ENCODE measurements at regions of chr18 and their contacts with region 1.

Region 1: GRCh38 chr18:57881818-57882413 is 78.8 kb upstream of the ATP8B1 start:
- DNase-seq: peak; percentile 2 to 48 (median 33)
- ATAC-seq: peak; percentile 79
- H3K4me3 ChIP-seq: no peak overlapping the region
- H3K4me3 Mint-ChIP-seq: no peak overlapping the region
- H3K27ac ChIP-seq: no peak overlapping the region
- H3K27ac Mint-ChIP-seq: no peak overlapping the region
- H3K4me1 ChIP-seq: no peaks in the 10 kb centered on the region
- H3K4me1 Mint-ChIP-seq: no peaks in the 10 kb centered on the region
- H3K27me3 ChIP-seq: no peaks in the 10 kb centered on the region
- H3K27me3 Mint-ChIP-seq: peaks cover 2 to 24% (median 20%) of the 10 kb centered on the region in 5 donors

Region 2: GRCh38 chr18:57544936-57545660 is 336.8 kb before region 1 on chr18:
- CTCF ChIA-PET with region 1: no interaction called
- POLR2A ChIA-PET with region 1: no interaction called
- intact Hi-C with region 1: no loop called
- DNase-seq: no peak
- ATAC-seq: peak; percentile 24
- H3K4me3 ChIP-seq: no peak overlapping the region
- H3K4me3 Mint-ChIP-seq: peak overlapping the region in 1 of 10 donors; percentile 2
- H3K27ac ChIP-seq: no peak overlapping the region
- H3K27ac Mint-ChIP-seq: no peak overlapping the region
- H3K4me1 ChIP-seq: no peaks in the 10 kb centered on the region
- H3K4me1 Mint-ChIP-seq: peaks cover 6 to 16% (median 10%) of the 10 kb centered on the region in 7 donors
- H3K27me3 ChIP-seq: no peaks in the 10 kb centered on the region
- H3K27me3 Mint-ChIP-seq: peaks cover 0 to 4% (median 0%) of the 10 kb centered on the region in 5 donors

Region 3: DNA sequence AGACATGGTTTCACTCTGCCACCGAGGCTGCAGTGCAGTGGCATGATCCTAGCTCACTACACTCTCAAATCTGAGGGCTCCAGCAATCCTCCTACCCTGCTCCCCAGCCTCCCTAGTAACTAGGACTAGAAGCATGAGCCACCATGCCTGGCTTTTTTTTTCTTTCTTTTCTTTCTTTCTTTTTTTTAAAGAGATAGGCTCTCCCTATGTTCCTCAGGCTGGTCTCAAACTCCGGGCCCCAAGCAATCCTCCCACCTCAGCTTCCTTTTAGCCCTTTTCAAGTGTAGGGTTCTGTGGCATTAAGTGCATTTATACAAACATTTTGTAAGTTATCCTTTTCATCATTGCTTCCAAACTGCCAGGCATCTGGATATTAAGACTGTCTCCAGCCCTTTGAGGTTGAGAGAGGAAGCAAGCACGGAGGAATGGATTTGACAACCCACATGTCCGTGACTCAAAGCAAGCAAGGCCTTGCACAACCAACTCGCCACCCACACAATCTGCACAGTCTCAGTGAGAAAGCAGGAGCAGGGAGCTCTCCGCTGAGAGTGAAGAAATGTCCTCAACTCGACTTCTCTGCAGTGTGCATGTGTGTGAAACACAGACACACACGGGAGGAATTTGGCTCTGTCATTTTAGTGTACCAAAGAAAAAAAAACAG is 144.4 kb before region 1 on chr18:
- CTCF ChIA-PET with region 1: no interaction called
- POLR2A ChIA-PET with region 1: no interaction called
- intact Hi-C with region 1: no loop called
- DNase-seq: no peak
- ATAC-seq: peak; percentile 71
- H3K4me3 ChIP-seq: no peak overlapping the region
- H3K4me3 Mint-ChIP-seq: peak overlapping the region in 1 of 10 donors; percentile 18
- H3K27ac ChIP-seq: no peak overlapping the region
- H3K27ac Mint-ChIP-seq: no peak overlapping the region
- H3K4me1 ChIP-seq: no peaks in the 10 kb centered on the region
- H3K4me1 Mint-ChIP-seq: peaks cover 0 to 6% (median 0%) of the 10 kb centered on the region in 7 donors
- H3K27me3 ChIP-seq: no peaks in the 10 kb centered on the region
- H3K27me3 Mint-ChIP-seq: no peaks in the 10 kb centered on the region

Region 4: GRCh38 chr18:58117786-58118403 is 236.0 kb after region 1 on chr18:
- CTCF ChIA-PET with region 1: interaction called, 26 read pairs
- POLR2A ChIA-PET with region 1: no interaction called
- intact Hi-C with region 1: loop called in 1 of 2 experiments (anchors 1 kb)
- DNase-seq: no peak
- ATAC-seq: peak; percentile 41
- H3K4me3 ChIP-seq: no peak overlapping the region
- H3K4me3 Mint-ChIP-seq: no peak overlapping the region
- H3K27ac ChIP-seq: no peak overlapping the region
- H3K27ac Mint-ChIP-seq: no peak overlapping the region
- H3K4me1 ChIP-seq: no peaks in the 10 kb centered on the region
- H3K4me1 Mint-ChIP-seq: peaks cover 0 to 9% (median 0%) of the 10 kb centered on the region in 7 donors
- H3K27me3 ChIP-seq: no peaks in the 10 kb centered on the region
- H3K27me3 Mint-ChIP-seq: peaks cover 0 to 14% (median 4%) of the 10 kb centered on the region in 5 donors

Region 5: DNA sequence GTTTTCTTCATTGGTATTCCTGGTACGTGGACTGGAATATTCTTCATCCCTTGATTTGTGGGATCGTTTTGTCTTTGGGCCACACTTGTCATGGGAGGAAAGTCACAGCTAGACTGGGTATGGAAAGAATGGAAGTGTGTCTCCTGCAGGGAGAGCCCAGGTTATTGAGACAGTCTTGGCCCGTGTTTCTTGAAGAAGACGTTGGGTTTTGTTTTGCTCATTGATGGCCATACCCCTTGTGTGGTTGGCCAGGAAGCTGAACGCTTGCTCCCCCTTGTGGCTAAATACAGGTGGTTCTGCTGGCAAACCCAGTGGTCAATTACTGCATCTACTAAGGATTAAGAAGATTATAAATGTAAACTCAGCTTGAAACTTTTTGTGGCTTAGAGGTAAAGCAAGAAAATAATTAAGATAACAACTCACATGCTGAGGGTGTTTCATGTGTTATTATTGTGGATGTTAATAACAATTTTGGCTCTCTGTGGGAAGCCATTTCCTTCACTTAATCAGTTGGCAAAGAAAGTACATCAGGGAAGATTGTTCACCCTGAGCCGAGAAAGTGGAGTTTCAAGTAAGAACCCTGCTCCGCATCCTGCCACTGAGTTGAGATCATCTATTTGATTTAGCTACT is 253.9 kb after region 1 on chr18:
- CTCF ChIA-PET with region 1: no interaction called
- POLR2A ChIA-PET with region 1: no interaction called
- intact Hi-C with region 1: loop called in 1 of 2 experiments (anchors 5 kb)
- DNase-seq: peak in 7 of 9 donors; percentile 13 to 42 (median 28)
- ATAC-seq: peak; percentile 79
- H3K4me3 ChIP-seq: no peak overlapping the region
- H3K4me3 Mint-ChIP-seq: no peak overlapping the region
- H3K27ac ChIP-seq: no peak overlapping the region
- H3K27ac Mint-ChIP-seq: no peak overlapping the region
- H3K4me1 ChIP-seq: no peaks in the 10 kb centered on the region
- H3K4me1 Mint-ChIP-seq: peaks cover 5 to 14% (median 8%) of the 10 kb centered on the region in 7 donors
- H3K27me3 ChIP-seq: no peaks in the 10 kb centered on the region
- H3K27me3 Mint-ChIP-seq: peaks cover 12 to 31% (median 24%) of the 10 kb centered on the region in 5 donors

Region 6: GRCh38 chr18:58180738-58181353 is 298.9 kb after region 1 on chr18:
- CTCF ChIA-PET with region 1: interaction called, 3 read pairs
- POLR2A ChIA-PET with region 1: no interaction called
- intact Hi-C with region 1: loop called in 1 of 2 experiments (anchors 5 kb)
- DNase-seq: peak; percentile 25 to 68 (median 50)
- ATAC-seq: peak; percentile 81
- H3K4me3 ChIP-seq: no peak overlapping the region
- H3K4me3 Mint-ChIP-seq: no peak overlapping the region
- H3K27ac ChIP-seq: no peak overlapping the region
- H3K27ac Mint-ChIP-seq: no peak overlapping the region
- H3K4me1 ChIP-seq: no peaks in the 10 kb centered on the region
- H3K4me1 Mint-ChIP-seq: peaks cover 0 to 4% (median 0%) of the 10 kb centered on the region in 7 donors
- H3K27me3 ChIP-seq: peaks cover 0 to 6% of the 10 kb centered on the region in 2 donors
- H3K27me3 Mint-ChIP-seq: peaks cover 0 to 12% (median 4%) of the 10 kb centered on the region in 5 donors